ENCODE measurements at regions of chr10 and their contacts with region 1.

Region 1: DNA sequence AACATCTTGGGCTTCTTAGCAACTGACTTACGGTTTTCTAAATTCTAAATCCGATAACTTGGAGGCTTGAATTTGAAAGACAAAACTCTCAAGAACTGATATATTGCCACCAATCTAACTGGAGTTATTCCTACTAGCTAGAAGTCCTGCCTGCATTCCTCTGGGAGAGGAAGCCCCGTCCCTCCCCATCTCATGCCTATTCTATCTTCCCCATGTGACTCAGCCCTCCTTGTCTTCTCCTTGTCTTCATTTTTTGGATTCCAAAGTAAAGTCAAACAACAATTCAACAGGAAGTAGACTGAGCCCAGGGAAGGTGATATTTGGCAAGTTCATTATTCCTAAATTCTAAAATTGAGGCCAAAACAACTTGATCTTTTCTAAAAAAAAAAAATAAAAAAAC is 587.7 kb downstream of the KCNMA1 start:
- DNase-seq: no peak
- H3K4me3 ChIP-seq: no peak overlapping the region
- H3K27ac ChIP-seq: no peak overlapping the region
- H3K4me1 ChIP-seq: peaks cover 3% of the 10 kb centered on the region
- H3K27me3 ChIP-seq: no peaks in the 10 kb centered on the region
- CTCF ChIP-seq: no peak

Region 2: GRCh38 chr10:77016278-77016815 is 33.5 kb before region 1 on chr10:
- CTCF ChIA-PET with region 1: no interaction called
- dilution Hi-C with region 1: loop called (anchors 5 kb)
- in situ Hi-C with region 1: no loop called
- intact Hi-C with region 1: no loop called
- DNase-seq: no peak
- H3K4me3 ChIP-seq: no peak overlapping the region
- H3K27ac ChIP-seq: no peak overlapping the region
- H3K4me1 ChIP-seq: peaks cover 8% of the 10 kb centered on the region
- H3K27me3 ChIP-seq: no peaks in the 10 kb centered on the region
- CTCF ChIP-seq: no peak

Region 3: GRCh38 chr10:77201135-77202106 is 151.5 kb after region 1 on chr10:
- CTCF ChIA-PET with region 1: no interaction called
- dilution Hi-C with region 1: no loop called
- in situ Hi-C with region 1: no loop called
- intact Hi-C with region 1: no loop called
- DNase-seq: no peak
- H3K4me3 ChIP-seq: no peak overlapping the region
- H3K27ac ChIP-seq: no peak overlapping the region
- H3K4me1 ChIP-seq: peaks cover 18% of the 10 kb centered on the region
- H3K27me3 ChIP-seq: no peaks in the 10 kb centered on the region
- CTCF ChIP-seq: no peak

Region 4: DNA sequence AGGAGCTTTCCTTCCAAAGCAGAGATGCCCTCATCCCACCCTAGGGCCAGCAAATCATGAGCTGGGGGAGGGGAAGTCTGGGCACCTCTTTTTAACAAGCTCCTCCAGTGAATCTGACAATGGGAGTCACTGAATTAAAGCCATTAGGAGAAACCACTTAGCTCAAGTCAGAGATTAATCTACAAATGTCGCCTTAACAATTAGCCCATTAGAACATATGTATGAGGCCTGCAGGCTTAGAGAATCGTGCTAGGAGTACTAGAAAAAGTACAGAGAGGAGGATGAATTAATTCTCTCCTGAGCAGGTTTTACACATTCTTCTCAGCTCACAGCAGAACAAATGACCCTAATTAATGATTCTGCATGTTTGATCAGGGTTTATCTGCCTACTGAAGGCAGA is 206.4 kb after region 1 on chr10:
- CTCF ChIA-PET with region 1: no interaction called
- dilution Hi-C with region 1: no loop called
- in situ Hi-C with region 1: no loop called
- intact Hi-C with region 1: no loop called
- DNase-seq: no peak
- H3K4me3 ChIP-seq: no peak overlapping the region
- H3K27ac ChIP-seq: no peak overlapping the region
- H3K4me1 ChIP-seq: no peaks in the 10 kb centered on the region
- H3K27me3 ChIP-seq: no peaks in the 10 kb centered on the region
- CTCF ChIP-seq: no peak

Measured in mammary epithelial cell (primary cell).